Heart left ventricle (tissue), 16 donors: ENCODE measurements at regions of chr10 and their contacts with region 1.

Region 1: GRCh38 chr10:110497438-110498086 is at the start of gene DUSP5:
- DNase-seq: peak; percentile 94 to 98 (median 95)
- ATAC-seq: peak; percentile 62 to 90 (median 80)
- H3K4me3 ChIP-seq: peak within 1 kb of the TSS; percentile 51 to 97 (median 83)
- H3K27ac ChIP-seq: peak within 1 kb of the TSS; percentile 78 to 98 (median 94)
- H3K4me1 ChIP-seq: peaks cover 10 to 61% (median 36%) of the 10 kb centered on the region in 12 donors
- H3K27me3 ChIP-seq: no peaks in the 10 kb centered on the region
- CTCF ChIP-seq: peak in 1 of 12 donors; percentile 6
- POLR2A ChIP-seq: peak; percentile 96 to 99
- total RNA-seq, gene DUSP5: 5.5 to 36.4 (median 16.1) TPM

Region 2: DNA sequence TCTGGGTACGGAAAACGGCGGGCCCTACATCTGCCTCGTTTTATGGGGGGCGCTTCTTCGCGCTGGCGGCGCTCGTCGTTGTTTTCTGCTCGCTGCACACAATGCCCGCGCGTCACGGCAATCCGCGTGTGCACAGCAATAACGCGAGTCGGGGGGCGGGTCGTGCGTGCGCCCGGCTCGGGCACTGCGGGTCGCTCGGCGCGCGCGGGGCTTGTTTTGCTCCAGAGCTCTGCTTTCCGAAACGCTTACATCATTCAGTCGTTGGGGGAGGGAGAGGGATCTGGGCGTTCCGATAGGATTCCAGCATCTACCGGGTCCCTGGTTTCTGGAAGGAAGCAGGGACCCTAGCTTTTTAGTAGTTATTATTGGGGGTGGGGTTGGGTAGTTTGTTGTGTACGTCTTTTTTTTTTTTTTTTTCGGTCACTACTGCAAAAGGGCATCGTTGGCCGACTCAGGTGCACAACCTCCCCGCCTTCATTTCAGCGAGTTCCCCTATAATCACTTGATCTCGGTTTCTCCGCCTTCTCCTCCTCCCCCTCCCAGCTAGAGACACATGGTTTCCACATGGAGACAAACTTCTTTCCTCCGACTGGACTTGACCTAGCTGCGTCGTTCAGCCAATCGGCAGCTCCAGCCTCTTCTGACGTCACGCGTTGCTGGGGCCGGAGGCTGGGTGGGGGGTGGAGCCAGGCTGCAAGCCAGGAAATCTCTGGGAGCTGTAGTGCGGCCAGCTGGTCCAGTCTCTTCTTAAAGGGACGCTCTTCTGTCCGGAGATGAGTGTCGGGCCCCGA is 286.7 kb before region 1 on chr10:
- intact Hi-C with region 1: loop called in 1 of 10 experiments (anchors 10 kb)
- DNase-seq: peak; percentile 97 to 98 (median 97)
- ATAC-seq: peak; percentile 90 to 92 (median 91)
- H3K4me3 ChIP-seq: peak overlapping the region; percentile 61 to 92 (median 83)
- H3K27ac ChIP-seq: peak overlapping the region; percentile 94 to 99 (median 98)
- H3K4me1 ChIP-seq: peaks cover 11 to 51% (median 34%) of the 10 kb centered on the region in 12 donors
- H3K27me3 ChIP-seq: no peaks in the 10 kb centered on the region
- CTCF ChIP-seq: no peak
- POLR2A ChIP-seq: peak in 1 of 2 donors; percentile 76

Region 3: GRCh38 chr10:110304780-110305421 is 192.7 kb before region 1 on chr10 and contains the start of gene SMNDC1:
- intact Hi-C with region 1: loop called in 4 of 10 experiments (anchors 2 to 5 kb)
- DNase-seq: peak; percentile 97 to 98 (median 98)
- ATAC-seq: peak; percentile 95 to 97 (median 96)
- H3K4me3 ChIP-seq: peak within 1 kb of the TSS; percentile 72 to 93 (median 86)
- H3K27ac ChIP-seq: peak within 1 kb of the TSS; percentile 81 to 96 (median 92)
- H3K4me1 ChIP-seq: peaks cover 0 to 55% (median 41%) of the 10 kb centered on the region in 12 donors
- H3K27me3 ChIP-seq: no peaks in the 10 kb centered on the region
- CTCF ChIP-seq: no peak
- POLR2A ChIP-seq: peak in 1 of 2 donors; percentile 72
- total RNA-seq, gene SMNDC1: 5.2 to 23.1 (median 20.7) TPM

Region 4: DNA sequence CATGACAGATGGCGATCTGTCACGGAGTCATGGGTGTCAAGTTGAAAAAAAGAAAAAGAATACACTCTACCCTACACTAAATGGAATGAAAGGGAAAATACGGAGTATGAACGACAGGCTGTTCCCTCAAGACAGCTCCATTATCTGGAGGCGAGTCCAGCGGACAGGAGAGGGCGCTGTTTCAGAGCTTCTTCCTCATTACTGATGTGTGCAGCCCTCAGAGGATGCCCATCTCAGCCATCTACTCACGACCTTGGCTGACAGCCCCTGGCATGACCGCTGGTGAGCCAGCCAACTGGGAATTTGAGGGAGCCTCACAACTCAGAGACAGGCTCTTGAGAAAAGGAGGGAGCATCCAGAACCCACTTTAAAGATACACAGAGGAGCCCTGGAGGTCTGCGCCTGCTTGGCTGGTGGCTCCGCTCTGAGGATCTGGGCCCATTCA is 143.2 kb before region 1 on chr10:
- intact Hi-C with region 1: loop called in 6 of 10 experiments (anchors 2 to 10 kb)
- DNase-seq: peak; percentile 76 to 85 (median 78)
- ATAC-seq: peak; percentile 62 to 91 (median 82)
- H3K4me3 ChIP-seq: no peak overlapping the region
- H3K27ac ChIP-seq: no peak overlapping the region
- H3K4me1 ChIP-seq: peaks cover 0 to 45% (median 8%) of the 10 kb centered on the region in 12 donors
- H3K27me3 ChIP-seq: peaks cover 0 to 3% (median 0%) of the 10 kb centered on the region in 9 donors
- CTCF ChIP-seq: peak; percentile 54 to 85 (median 73)
- POLR2A ChIP-seq: no peak

Region 5: GRCh38 chr10:110535958-110536891 is 38.7 kb after region 1 on chr10:
- intact Hi-C with region 1: loop called in 1 of 10 experiments (anchors 5 kb)
- DNase-seq: peak; percentile 36 to 58 (median 44)
- ATAC-seq: peak in 3 of 4 donors; percentile 68 to 83 (median 83)
- H3K4me3 ChIP-seq: no peak overlapping the region
- H3K27ac ChIP-seq: no peak overlapping the region
- H3K4me1 ChIP-seq: peaks cover 0 to 25% (median 0%) of the 10 kb centered on the region in 12 donors
- H3K27me3 ChIP-seq: no peaks in the 10 kb centered on the region
- CTCF ChIP-seq: peak; percentile 14 to 64 (median 54)
- POLR2A ChIP-seq: no peak

Region 6: GRCh38 chr10:110871298-110872084 is 373.9 kb after region 1 on chr10 and contains the start of gene PDCD4:
- intact Hi-C with region 1: loop called in 1 of 10 experiments (anchors 10 kb)
- DNase-seq: peak; percentile 100
- ATAC-seq: peak; percentile 96 to 97 (median 97)
- H3K4me3 ChIP-seq: peak within 1 kb of the TSS; percentile 68 to 100 (median 93)
- H3K27ac ChIP-seq: peak within 1 kb of the TSS; percentile 93 to 99 (median 96)
- H3K4me1 ChIP-seq: peaks cover 0 to 83% (median 18%) of the 10 kb centered on the region in 12 donors
- H3K27me3 ChIP-seq: no peaks in the 10 kb centered on the region
- CTCF ChIP-seq: no peak
- POLR2A ChIP-seq: peak; percentile 52 to 95
- total RNA-seq, gene PDCD4: 21.7 to 73.2 (median 44.1) TPM